ENCODE measurements at regions of chr16 and their contacts with region 1.

Region 1: DNA sequence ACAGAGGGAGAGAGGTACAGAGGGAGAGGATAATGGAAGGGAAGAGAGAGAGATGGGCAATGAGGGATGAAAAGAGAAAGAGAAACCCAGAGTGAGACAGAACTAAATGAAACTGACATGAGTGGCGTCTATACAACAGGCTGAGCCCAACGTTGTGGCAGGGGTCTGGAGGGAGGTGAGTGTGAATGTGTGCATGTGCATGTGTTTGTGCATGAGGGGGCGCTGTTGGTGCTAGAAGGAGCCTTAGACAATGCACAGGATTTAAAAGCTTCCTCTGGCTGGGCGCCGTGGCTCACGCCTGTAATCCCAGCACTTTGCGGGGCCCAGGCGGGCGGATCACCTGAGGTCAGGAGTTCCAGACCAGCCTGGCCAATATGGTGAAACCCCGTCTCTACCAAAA is 454.8 kb upstream of the CDH11 start:
- DNase-seq: peak; percentile 43 to 78
- H3K4me3 ChIP-seq: no peak overlapping the region
- H3K27ac ChIP-seq: no peak overlapping the region
- H3K4me1 ChIP-seq: peaks cover 0 to 5% (median 2%) of the 10 kb centered on the region in 4 experiments; a peak in 5 of 7 replicates
- H3K27me3 ChIP-seq: no peaks in the 10 kb centered on the region
- CTCF ChIP-seq: peak; percentile 65 to 81 (median 71)
- EP300 ChIP-seq: no peak
- POLR2A ChIP-seq: no peak
- RAD21 ChIP-seq: peak; percentile 79 to 80

Region 2: DNA sequence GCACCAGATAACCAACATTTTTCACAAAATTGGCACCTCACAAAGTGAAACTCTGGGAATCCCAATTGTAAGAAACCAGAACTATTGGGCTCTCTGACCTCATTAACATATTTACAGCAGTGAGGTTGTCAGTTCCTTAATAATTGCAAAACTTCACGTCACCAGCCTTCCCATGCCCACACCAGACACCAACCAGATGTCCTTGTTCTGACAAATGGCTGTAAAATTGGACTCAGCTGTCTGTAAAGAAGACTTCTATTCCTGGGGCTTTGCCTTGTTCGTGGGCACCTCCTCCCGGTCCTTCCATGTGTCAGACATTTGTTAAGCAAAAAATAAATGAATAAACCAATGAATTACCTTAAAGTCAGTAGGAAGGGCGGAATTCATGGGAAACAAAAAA is 170.5 kb before region 1 on chr16:
- CTCF ChIA-PET with region 1: no interaction called
- POLR2A ChIA-PET with region 1: no interaction called
- DNase-seq: no peak
- H3K4me3 ChIP-seq: no peak overlapping the region
- H3K27ac ChIP-seq: no peak overlapping the region
- H3K4me1 ChIP-seq: no peaks in the 10 kb centered on the region
- H3K27me3 ChIP-seq: no peaks in the 10 kb centered on the region
- CTCF ChIP-seq: no peak
- EP300 ChIP-seq: no peak
- POLR2A ChIP-seq: no peak
- RAD21 ChIP-seq: no peak

Region 3: DNA sequence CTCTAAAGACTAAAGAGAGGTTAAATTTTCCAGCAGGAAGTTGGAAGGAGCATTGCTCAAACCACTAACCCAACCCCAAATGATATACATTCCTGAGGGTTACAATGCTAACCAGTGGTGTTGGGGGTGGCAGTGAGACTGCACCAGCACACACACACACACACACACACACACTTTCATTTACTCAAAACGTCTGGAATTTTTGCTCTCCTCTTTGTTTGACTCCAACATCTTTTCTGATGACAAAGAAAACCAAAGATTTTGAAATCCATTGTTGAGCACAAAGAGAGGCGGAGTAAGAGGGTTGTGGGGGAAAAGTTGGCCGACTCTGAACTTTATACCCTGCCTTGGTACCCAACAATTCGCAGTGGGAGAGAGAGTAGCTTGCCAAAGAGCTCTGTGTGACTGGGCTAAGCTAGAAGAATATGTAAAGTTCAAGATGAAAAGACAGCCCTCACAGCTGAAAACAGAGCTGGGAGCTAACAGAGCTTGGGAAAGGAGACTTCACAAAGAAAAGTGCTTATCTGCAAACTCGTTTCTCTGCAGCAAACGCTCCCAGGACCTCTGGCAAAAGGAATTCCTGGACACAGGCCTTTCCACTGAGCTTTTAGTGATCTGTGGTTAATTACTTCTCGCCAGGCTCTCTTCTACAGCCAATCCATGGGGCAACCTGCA is 28.7 kb before region 1 on chr16:
- CTCF ChIA-PET with region 1: interaction called, 10 read pairs
- POLR2A ChIA-PET with region 1: no interaction called
- DNase-seq: no peak
- H3K4me3 ChIP-seq: no peak overlapping the region
- H3K27ac ChIP-seq: 0 out of 2 replicates have a peak overlapping the region, but pooled peaks have one; percentile 7
- H3K4me1 ChIP-seq: peaks cover 0 to 12% (median under 1%) of the 10 kb centered on the region in 4 experiments; a peak in 4 of 7 replicates
- H3K27me3 ChIP-seq: no peaks in the 10 kb centered on the region
- CTCF ChIP-seq: no peak
- EP300 ChIP-seq: no peak
- POLR2A ChIP-seq: no peak
- RAD21 ChIP-seq: no peak

Region 4: DNA sequence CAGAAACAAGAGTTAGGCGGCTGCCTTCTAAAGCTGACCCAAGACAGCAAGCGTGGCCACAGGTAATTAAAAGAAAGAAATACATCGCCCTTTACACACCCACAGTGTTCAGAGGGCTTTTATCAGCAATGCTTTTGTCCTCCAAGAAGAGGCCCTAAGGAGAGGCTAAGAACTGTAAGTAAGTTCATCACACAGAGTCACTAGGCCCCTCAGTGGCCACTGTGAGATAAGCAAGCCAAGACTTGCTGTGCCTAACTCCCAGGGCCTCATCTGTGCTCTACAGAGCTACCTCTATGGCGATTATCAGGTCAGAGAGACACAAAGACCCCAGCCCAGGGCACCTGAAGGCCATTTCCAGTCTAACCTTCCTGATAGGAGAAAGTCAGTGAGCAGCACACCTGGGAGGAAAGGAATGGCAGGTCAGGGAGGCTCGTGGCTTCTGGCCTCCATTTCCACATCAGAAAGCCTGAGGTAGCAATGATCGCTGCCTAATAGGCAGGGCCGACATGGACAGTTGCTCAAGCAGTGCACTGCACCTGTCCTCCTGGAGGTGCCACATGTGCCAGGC is 90.5 kb after region 1 on chr16:
- CTCF ChIA-PET with region 1: interaction called, 14 read pairs
- POLR2A ChIA-PET with region 1: no interaction called
- DNase-seq: no peak
- H3K4me3 ChIP-seq: no peak overlapping the region
- H3K27ac ChIP-seq: no peak overlapping the region
- H3K4me1 ChIP-seq: peaks cover 0 to 5% (median 2%) of the 10 kb centered on the region in 4 experiments; a peak in 3 of 7 replicates
- H3K27me3 ChIP-seq: no peaks in the 10 kb centered on the region
- CTCF ChIP-seq: peak; percentile 30 to 55 (median 34)
- EP300 ChIP-seq: no peak
- POLR2A ChIP-seq: no peak
- RAD21 ChIP-seq: peak; percentile 70 to 80

Measured in H1 (cell line).